Lower lobe of right lung (tissue), 2 donors: ENCODE measurements at regions of chr13 and their contacts with region 1.

Region 1: DNA sequence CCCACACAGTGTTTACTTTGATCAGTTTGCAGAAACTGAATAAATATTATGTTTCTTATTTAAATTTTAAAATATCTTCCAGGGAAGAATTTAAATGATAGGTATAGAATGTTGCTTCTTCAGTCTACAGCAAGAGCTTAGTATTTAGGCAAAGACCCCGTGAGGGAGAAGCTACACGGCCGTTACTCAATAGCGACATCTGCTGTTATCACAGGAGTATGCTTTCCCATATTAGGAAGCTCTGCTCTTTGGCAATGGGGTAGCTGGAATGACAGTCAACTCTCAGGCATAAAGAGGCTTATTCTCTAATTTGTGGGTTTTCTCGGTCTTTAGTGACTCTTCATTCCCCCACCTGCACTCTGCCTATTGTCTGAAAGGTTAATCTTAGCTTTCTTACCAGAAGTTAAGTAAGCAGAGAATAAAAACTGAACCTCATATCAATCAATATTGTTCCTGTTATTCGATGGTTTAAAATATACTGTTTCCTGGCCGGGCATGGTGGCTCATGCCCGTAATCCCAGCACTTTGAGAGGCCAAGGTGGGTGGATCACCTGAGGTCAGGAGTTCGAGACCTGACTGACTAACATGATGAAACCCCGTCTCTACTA is 13.2 kb upstream of the LHFPL6 start:
- DNase-seq: no peak
- ATAC-seq: peak; percentile 75 to 88
- H3K4me3 ChIP-seq: no peak overlapping the region
- H3K27ac ChIP-seq: no peak overlapping the region
- H3K4me1 ChIP-seq: peaks cover 6% of the 10 kb centered on the region
- H3K27me3 ChIP-seq: no peaks in the 10 kb centered on the region
- CTCF ChIP-seq: peak; percentile 91

Region 2: DNA sequence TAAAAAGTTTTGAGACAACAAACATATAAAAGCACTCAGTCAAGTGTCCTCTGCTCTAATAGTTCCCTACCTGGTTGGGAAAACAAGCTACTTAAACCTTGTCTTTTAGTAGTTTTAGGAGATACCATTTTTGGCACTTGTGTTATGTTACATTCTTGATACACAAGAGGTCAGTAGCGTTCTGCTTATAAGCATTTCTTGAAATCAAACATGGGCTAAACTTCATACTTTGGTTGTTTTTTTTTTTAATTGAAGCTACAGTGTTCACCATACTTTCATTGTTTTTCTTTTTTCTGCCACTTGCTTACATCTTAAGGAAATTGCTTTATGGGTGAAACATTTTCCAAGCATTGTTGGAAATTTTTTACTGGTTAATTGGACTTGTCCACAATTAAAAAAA is 565.0 kb before region 1 on chr13:
- intact Hi-C with region 1: loop called (anchors 10 kb)
- DNase-seq: no peak
- ATAC-seq: no peak
- H3K4me3 ChIP-seq: no peak overlapping the region
- H3K27ac ChIP-seq: no peak overlapping the region
- H3K4me1 ChIP-seq: no peaks in the 10 kb centered on the region
- H3K27me3 ChIP-seq: no peaks in the 10 kb centered on the region
- CTCF ChIP-seq: peak; percentile 40

Region 3: GRCh38 chr13:39410096-39410901 is 205.9 kb before region 1 on chr13:
- intact Hi-C with region 1: loop called (anchors 5 kb)
- DNase-seq: no peak
- ATAC-seq: no peak
- H3K4me3 ChIP-seq: no peak overlapping the region
- H3K27ac ChIP-seq: no peak overlapping the region
- H3K4me1 ChIP-seq: peaks cover 36% of the 10 kb centered on the region
- H3K27me3 ChIP-seq: no peaks in the 10 kb centered on the region
- CTCF ChIP-seq: no peak

Region 4: DNA sequence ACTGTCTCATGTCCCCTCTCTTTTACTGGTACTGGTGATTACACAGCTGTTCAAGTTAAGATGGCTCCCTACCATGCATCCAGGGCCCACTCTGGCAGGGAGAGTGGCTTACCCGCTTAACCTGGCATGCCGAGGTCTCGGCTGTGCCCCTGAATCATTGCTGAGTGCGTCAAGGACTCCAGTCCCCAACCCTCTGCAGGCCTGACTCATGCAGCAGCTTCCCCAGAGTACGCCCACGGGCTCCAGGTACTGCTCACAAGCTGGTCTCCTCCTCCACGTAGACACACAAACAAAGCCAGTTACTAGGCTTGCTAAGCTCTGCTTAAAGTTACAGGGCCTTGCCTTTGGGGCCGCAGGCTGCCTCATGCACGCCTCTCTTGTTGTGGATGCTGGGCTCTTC is 486.7 kb after region 1 on chr13:
- intact Hi-C with region 1: no loop called
- DNase-seq: no peak
- ATAC-seq: peak; percentile 42 to 45
- H3K4me3 ChIP-seq: no peak overlapping the region
- H3K27ac ChIP-seq: no peak overlapping the region
- H3K4me1 ChIP-seq: no peaks in the 10 kb centered on the region
- H3K27me3 ChIP-seq: no peaks in the 10 kb centered on the region
- CTCF ChIP-seq: no peak